ENCODE measurements at regions of chr6 and their contacts with region 1.

Region 1: DNA sequence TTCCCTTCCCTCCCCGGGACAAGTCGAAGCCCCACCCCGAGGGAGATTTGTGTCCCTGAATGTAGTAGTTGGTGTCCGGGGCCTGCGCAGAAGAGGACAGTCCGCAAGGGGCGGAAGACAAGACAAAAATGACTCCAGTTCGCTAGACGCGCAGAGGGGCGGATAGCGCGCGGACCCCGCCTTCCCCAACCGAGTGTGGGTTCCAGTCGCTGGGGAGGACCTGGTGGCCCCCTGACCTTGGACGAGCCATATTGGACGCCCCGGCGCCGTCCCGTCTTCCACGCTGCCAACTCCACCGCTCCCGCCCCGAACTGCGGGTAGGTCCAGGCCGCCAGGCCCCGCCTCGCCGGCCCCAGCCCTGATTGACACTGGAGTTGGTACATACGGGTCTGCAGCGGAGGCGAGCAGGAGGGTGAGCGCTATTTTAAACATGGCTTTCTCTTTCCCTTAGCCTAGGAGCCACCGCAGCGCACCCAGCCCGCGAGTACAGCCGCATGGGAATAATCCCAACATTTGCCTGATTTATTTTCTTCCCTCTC is 802 bp downstream of the HMGN3 start:
- DNase-seq: peak; percentile 91
- H3K4me3 ChIP-seq: peak overlapping the region; percentile 57 to 100 (median 98)
- H3K27ac ChIP-seq: peak overlapping the region; percentile 75
- H3K4me1 ChIP-seq: peaks cover 20% of the 10 kb centered on the region
- H3K27me3 ChIP-seq: no peaks in the 10 kb centered on the region
- CTCF ChIP-seq: peak in 1 of 2 donors; percentile 26
- POLR2A ChIP-seq: peak; percentile 89

Region 2: GRCh38 chr6:78611958-78612357 is 621.7 kb before region 1 on chr6:
- CTCF ChIA-PET with region 1: no interaction called
- POLR2A ChIA-PET with region 1: no interaction called
- dilution Hi-C with region 1: no loop called
- intact Hi-C with region 1: loop called (anchors 5 kb)
- DNase-seq: peak; percentile 40
- H3K4me3 ChIP-seq: no peak overlapping the region
- H3K27ac ChIP-seq: no peak overlapping the region
- H3K4me1 ChIP-seq: peaks cover 20% of the 10 kb centered on the region
- H3K27me3 ChIP-seq: no peaks in the 10 kb centered on the region
- CTCF ChIP-seq: peak; percentile 31 to 36
- POLR2A ChIP-seq: no peak

Region 3: DNA sequence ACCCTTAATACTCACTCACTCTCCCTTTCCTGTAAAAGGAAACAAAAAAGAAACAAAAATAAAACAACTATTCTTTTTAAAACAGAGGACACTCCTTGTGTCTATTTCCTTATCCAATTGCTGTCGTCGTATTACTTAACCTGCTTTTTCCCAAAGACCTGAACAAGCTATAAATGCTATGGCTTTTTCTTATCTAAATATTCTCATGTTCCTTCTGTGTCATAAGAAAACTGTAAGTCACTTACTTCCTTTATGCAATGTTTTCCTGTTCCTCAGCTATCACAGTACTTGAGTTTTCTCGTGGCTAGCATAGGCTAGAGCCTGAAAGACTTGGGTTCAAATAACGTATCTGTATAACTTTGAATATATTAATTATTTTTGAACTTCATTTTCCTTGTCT is 267.1 kb before region 1 on chr6:
- CTCF ChIA-PET with region 1: no interaction called
- POLR2A ChIA-PET with region 1: no interaction called
- dilution Hi-C with region 1: no loop called
- intact Hi-C with region 1: loop called (anchors 5 kb)
- DNase-seq: peak; percentile 58
- H3K4me3 ChIP-seq: peak overlapping the region in 1 of 3 experiments; percentile 11
- H3K27ac ChIP-seq: peak overlapping the region; percentile 55
- H3K4me1 ChIP-seq: peaks cover 24% of the 10 kb centered on the region
- H3K27me3 ChIP-seq: no peaks in the 10 kb centered on the region
- CTCF ChIP-seq: no peak
- POLR2A ChIP-seq: no peak

Region 4: GRCh38 chr6:79377888-79378348 is 144.2 kb after region 1 on chr6:
- CTCF ChIA-PET with region 1: no interaction called
- POLR2A ChIA-PET with region 1: no interaction called
- dilution Hi-C with region 1: no loop called
- intact Hi-C with region 1: loop called (anchors 1 kb)
- DNase-seq: peak; percentile 93
- H3K4me3 ChIP-seq: peak overlapping the region in 1 of 3 experiments; percentile 47
- H3K27ac ChIP-seq: peak overlapping the region; percentile 78
- H3K4me1 ChIP-seq: peaks cover 42% of the 10 kb centered on the region
- H3K27me3 ChIP-seq: no peaks in the 10 kb centered on the region
- CTCF ChIP-seq: no peak
- POLR2A ChIP-seq: peak; percentile 50

Region 5: GRCh38 chr6:79466207-79466834 is 232.6 kb after region 1 on chr6:
- CTCF ChIA-PET with region 1: interaction called, 3 read pairs
- POLR2A ChIA-PET with region 1: no interaction called
- dilution Hi-C with region 1: no loop called
- intact Hi-C with region 1: loop called (anchors 1 kb)
- DNase-seq: peak; percentile 59
- H3K4me3 ChIP-seq: no peak overlapping the region
- H3K27ac ChIP-seq: no peak overlapping the region
- H3K4me1 ChIP-seq: peaks cover 7% of the 10 kb centered on the region
- H3K27me3 ChIP-seq: no peaks in the 10 kb centered on the region
- CTCF ChIP-seq: peak; percentile 27 to 33
- POLR2A ChIP-seq: no peak

Region 6: GRCh38 chr6:79544939-79545450 is 311.3 kb after region 1 on chr6:
- CTCF ChIA-PET with region 1: no interaction called
- POLR2A ChIA-PET with region 1: no interaction called
- dilution Hi-C with region 1: no loop called
- intact Hi-C with region 1: loop called (anchors 2 kb)
- DNase-seq: peak; percentile 99
- H3K4me3 ChIP-seq: no peak overlapping the region
- H3K27ac ChIP-seq: peak overlapping the region; percentile 86
- H3K4me1 ChIP-seq: peaks cover 24% of the 10 kb centered on the region
- H3K27me3 ChIP-seq: no peaks in the 10 kb centered on the region
- CTCF ChIP-seq: peak; percentile 60 to 62
- POLR2A ChIP-seq: peak; percentile 28